ENCODE measurements at regions of chr17 and their contacts with region 1.

Region 1: DNA sequence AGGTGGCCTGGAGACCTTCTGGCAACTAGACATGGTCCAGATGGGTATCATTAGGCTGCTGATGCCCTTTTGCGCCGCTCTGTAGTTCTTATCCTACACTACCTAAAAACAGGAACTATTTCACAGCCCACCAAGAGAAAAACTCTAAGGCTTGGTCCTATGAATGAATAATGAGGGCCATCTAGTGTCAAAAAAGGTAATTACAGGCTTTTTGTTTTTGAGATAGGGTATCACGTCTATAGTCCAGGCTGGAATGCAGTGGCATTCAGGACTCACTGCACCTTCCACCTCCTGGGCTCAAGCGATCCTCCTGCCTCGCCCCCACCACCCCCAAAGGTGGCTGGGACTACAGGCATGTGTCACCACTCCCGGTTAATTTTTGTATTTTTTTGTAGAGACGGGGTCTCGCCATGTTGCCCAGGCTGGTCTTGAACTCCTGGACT is 20.9 kb downstream of the COIL start:
- DNase-seq: no peak
- ATAC-seq: peak; percentile 64
- H3K4me3 Mint-ChIP-seq: no peak overlapping the region
- H3K27ac Mint-ChIP-seq: no peak overlapping the region
- H3K4me1 Mint-ChIP-seq: peaks cover 22% of the 10 kb centered on the region
- H3K27me3 Mint-ChIP-seq: no peaks in the 10 kb centered on the region

Region 2: GRCh38 chr17:55320594-55321426 is 1619.1 kb before region 1 on chr17:
- CTCF ChIA-PET with region 1: no interaction called
- POLR2A ChIA-PET with region 1: no interaction called
- intact Hi-C with region 1: no loop called
- DNase-seq: no peak
- ATAC-seq: no peak
- H3K4me3 Mint-ChIP-seq: no peak overlapping the region
- H3K27ac Mint-ChIP-seq: no peak overlapping the region
- H3K4me1 Mint-ChIP-seq: no peaks in the 10 kb centered on the region
- H3K27me3 Mint-ChIP-seq: no peaks in the 10 kb centered on the region

Region 3: DNA sequence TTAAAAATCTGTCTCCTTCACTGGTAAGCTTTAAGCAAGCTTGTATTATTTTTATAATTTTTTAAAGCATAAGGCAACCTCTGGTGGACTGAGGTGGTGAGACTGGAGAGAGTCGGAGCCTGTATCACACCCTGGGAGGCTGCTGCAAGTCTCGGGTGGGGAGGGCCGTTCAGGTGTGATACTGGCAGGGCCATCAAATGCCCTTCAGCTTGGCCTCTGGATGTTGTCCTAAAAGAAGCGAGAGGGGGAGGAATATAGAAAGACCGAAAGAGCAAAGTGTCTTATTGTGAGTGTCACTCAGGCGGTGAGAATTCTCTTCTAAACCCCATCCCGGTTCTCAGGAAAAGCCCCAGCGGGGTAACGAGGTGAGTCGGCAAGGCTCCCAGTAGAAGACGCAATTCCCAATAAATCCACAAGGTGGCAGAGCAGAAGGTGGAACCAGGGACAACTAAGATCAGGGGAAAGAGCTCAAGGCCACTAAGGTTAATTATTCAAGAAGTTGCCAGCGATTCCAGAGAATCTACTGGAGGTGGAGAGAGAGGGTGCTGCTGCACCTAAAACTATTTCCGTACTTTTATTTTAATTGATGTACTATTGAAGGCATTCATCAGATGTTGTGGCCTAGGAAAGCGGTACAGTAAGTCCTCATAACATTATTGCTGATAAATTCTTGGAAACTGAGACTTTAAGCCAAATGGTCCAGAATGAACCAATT is 120.3 kb before region 1 on chr17:
- CTCF ChIA-PET with region 1: interaction called, 15 read pairs
- POLR2A ChIA-PET with region 1: interaction called, 3 read pairs
- intact Hi-C with region 1: loop called (anchors 1 kb)
- DNase-seq: peak; percentile 84
- ATAC-seq: peak; percentile 83
- H3K4me3 Mint-ChIP-seq: no peak overlapping the region
- H3K27ac Mint-ChIP-seq: peak overlapping the region; percentile 7
- H3K4me1 Mint-ChIP-seq: peaks cover 22% of the 10 kb centered on the region
- H3K27me3 Mint-ChIP-seq: no peaks in the 10 kb centered on the region

Region 4: GRCh38 chr17:56891784-56892183 is 48.1 kb before region 1 on chr17:
- CTCF ChIA-PET with region 1: interaction called, 6 read pairs
- POLR2A ChIA-PET with region 1: no interaction called
- intact Hi-C with region 1: loop called (anchors 1 kb)
- DNase-seq: peak; percentile 71
- ATAC-seq: peak; percentile 52
- H3K4me3 Mint-ChIP-seq: no peak overlapping the region
- H3K27ac Mint-ChIP-seq: no peak overlapping the region
- H3K4me1 Mint-ChIP-seq: peaks cover 4% of the 10 kb centered on the region
- H3K27me3 Mint-ChIP-seq: no peaks in the 10 kb centered on the region

Region 5: GRCh38 chr17:56913864-56914640 is 25.9 kb before region 1 on chr17 and contains the start of gene TRIM25:
- CTCF ChIA-PET with region 1: interaction called, 6 read pairs
- POLR2A ChIA-PET with region 1: interaction called, 3 read pairs
- intact Hi-C with region 1: loop called in 1 of 2 experiments (anchors 1 kb)
- DNase-seq: peak; percentile 97
- ATAC-seq: peak; percentile 66
- H3K4me3 Mint-ChIP-seq: peak within 1 kb of the TSS; percentile 90
- H3K27ac Mint-ChIP-seq: peak within 1 kb of the TSS; percentile 95
- H3K4me1 Mint-ChIP-seq: peaks cover 61% of the 10 kb centered on the region
- H3K27me3 Mint-ChIP-seq: no peaks in the 10 kb centered on the region
- total RNA-seq, gene TRIM25: 173 to 241 TPM

Region 6: DNA sequence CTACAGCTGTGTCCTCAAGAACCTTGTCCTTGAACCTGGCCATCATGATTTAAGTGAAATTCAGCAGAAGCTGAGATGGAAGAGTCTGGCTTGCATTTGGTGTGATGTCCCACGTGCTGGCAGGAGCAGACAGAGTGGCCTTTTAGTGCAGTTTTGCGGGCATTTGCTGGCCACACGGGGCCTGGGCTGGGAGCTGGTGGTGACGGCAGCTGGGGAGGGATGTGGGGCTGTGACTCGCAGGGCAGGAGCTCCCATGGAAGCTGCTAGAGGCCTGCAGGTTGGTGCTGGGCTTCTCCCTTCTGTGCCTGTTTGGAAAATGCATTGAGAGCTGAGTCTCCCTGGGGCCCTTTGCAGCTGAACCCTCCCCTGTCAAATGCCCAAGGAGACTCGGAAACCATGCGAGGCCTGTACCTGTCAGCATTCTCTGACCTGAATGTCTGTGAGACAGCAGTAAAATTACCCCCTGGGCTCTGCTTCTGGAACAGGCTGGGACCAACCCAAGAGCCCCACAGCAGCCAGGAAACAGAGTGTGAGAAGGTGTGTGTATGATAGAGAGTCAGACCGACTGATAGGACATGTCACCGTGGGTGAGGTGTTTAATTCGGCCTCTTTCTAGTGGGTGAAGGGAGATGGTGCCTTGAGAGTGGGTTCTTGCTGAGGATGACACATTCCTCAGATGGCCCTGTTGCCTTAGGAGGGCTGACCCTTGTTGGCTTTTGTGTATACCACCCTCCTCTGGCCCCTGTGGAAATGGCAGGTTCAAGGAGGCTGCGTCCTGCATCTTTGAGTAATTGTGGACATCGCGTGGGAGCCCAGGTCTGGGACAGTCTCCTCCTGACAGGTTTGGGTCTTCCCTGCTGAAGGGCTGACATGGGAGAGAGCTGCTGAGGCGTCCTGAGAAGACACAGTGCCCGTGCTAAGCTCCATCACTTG is 461.9 kb after region 1 on chr17:
- CTCF ChIA-PET with region 1: no interaction called
- POLR2A ChIA-PET with region 1: no interaction called
- intact Hi-C with region 1: no loop called
- DNase-seq: no peak
- ATAC-seq: no peak
- H3K4me3 Mint-ChIP-seq: no peak overlapping the region
- H3K27ac Mint-ChIP-seq: no peak overlapping the region
- H3K4me1 Mint-ChIP-seq: peaks cover 14% of the 10 kb centered on the region
- H3K27me3 Mint-ChIP-seq: no peaks in the 10 kb centered on the region

Measured in activated CD4-positive, alpha-beta T cell treated with anti-CD3 and anti-CD28 coated beads for 36 hours (primary cell).